AG04450 (cell line): ENCODE measurements at regions of chr22 and their contacts with region 1.

Region 1: DNA sequence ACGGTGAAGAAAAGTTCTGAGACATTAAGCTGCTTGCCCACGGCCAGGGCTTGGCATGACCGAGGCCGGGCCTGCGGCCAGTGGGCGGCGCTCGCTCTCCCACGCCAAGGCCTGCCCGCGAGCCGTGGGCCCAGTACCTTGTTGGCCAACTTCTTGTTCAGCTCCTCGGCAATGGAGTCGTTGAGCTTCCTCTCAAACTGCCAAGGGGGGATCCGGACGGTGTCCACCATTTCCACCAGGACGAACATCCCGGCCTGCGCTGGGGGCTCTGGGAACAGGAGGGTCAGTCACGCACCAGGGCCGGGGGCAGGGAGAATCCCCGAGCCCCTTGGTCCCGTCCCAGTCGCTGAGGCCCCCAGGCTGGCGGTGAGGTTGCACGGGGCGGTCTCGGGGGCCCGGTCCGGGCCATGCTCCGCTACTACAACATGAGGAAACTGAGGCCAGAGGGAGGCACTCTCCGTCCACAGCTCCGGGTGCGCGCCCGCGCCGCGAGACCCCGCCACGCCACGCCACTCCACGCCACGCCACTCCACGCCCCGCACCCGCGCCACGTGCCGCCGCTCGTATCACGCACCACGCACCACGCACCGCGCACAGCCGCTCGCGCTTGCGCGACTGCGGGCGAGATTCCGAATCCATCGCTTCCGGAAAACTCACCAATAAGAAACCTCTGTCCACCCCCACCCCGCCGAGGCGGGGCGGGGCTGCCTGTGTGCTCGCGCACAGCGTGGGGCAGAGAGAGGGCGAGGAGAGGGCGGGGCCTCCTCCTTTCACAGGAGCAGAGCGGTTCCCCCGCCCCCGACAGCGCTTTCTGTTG is at the start of gene POLR3H:
- DNase-seq: peak; percentile 94
- H3K4me3 ChIP-seq: peak within 1 kb of the TSS; percentile 92
- H3K27ac ChIP-seq: peak within 1 kb of the TSS; percentile 87
- H3K27me3 ChIP-seq: no peaks in the 10 kb centered on the region
- CTCF ChIP-seq: peak; percentile 69
- polyA plus RNA-seq, gene POLR3H: 36.3 and 41.1 TPM in 2 replicates

Region 2: DNA sequence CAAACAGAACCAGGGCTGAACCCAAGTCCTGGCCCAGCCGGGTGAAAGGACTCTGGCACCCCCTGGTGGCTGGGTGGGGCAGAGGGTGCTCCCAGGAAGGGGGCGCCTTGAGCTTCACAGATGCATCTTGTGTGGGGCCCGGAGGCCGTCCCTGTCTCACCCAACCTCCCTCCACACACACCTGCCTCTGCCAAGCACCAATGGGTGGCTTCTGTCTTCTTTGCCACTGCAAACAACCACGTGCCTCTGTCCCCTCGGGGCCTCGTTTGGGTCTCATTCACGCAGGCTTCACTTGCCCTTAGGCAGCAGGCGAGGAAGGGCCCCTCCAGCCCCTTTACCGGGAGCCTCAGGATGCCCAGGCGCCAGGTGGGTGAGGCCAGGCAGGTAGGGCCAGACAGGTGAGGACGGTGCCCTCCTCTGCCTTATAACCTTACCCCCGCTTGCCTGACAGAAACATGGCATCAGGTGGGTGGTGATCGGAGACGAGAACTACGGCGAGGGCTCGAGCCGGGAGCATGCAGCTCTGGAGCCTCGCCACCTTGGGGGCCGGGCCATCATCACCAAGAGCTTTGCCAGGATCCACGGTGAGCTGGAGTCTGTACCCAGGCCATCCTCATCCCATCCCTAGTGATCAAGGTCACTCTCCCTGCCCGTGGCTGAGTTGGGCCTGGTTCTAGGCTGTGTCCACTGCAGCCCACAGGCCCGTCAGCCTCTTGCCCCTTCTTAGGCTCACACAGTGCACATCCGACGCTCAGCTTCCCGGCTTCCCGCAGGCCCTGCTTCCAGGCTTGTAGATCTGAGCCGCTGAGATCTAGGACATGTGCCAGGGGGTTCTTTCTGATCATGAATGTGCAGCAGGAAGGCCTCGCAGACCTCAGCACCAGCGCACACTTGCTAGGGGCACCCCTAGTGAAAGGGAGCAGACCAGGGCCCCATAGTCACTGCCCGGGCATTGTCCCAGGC is 16.9 kb before region 1 on chr22:
- CTCF ChIA-PET with region 1: interaction called, 16 read pairs
- POLR2A ChIA-PET with region 1: interaction called, 3 read pairs
- DNase-seq: no peak
- H3K4me3 ChIP-seq: no peak overlapping the region
- H3K27ac ChIP-seq: peak overlapping the region; percentile 31
- H3K27me3 ChIP-seq: no peaks in the 10 kb centered on the region
- CTCF ChIP-seq: peak; percentile 86

Region 3: DNA sequence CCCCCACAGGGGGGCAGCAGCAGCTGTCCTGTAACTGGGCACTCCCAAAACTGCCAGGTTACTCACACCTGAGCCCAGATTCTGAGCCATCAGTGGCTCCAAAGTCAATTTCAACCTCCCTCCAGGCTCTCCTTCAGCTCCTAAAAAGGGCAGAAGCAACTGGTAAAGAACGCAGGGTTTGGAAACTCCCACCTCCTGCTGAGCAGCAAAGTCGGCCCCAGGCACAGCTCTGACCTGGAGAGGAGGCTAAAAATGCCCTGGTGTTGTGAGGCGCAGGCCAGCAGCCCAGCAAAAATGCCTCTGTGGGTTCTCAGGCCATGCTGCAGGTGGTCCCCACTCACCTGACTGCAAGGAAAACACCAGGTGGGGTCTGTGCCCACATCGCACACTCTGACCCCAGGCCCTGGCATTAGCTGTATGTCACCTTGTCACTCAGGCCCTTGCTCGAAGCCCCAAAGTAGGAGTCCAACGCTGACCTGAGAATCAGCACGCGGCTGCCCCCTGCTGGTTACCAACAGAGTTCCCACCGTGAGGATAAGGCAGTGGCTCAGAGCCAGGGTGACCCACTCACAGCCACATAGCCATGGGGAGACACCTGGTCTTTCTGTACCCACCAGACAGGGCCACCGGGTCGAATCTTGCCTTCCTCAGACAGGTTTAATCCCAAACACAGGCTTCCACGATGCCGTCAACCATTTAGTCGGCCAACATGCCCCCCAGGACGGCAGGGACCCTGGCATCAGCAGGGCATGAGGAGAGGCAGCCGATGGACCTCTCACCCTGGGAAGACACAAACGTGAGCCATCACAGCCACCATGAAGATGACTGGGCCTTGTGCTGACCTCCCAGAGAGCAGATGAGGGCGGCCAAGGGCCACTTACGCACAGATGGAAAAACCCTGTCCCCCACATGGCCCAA is 10.9 kb before region 1 on chr22:
- CTCF ChIA-PET with region 1: interaction called, 16 read pairs
- POLR2A ChIA-PET with region 1: no interaction called
- DNase-seq: no peak
- H3K4me3 ChIP-seq: no peak overlapping the region
- H3K27ac ChIP-seq: no peak overlapping the region
- H3K27me3 ChIP-seq: no peaks in the 10 kb centered on the region
- CTCF ChIP-seq: peak; percentile 80

Region 4: DNA sequence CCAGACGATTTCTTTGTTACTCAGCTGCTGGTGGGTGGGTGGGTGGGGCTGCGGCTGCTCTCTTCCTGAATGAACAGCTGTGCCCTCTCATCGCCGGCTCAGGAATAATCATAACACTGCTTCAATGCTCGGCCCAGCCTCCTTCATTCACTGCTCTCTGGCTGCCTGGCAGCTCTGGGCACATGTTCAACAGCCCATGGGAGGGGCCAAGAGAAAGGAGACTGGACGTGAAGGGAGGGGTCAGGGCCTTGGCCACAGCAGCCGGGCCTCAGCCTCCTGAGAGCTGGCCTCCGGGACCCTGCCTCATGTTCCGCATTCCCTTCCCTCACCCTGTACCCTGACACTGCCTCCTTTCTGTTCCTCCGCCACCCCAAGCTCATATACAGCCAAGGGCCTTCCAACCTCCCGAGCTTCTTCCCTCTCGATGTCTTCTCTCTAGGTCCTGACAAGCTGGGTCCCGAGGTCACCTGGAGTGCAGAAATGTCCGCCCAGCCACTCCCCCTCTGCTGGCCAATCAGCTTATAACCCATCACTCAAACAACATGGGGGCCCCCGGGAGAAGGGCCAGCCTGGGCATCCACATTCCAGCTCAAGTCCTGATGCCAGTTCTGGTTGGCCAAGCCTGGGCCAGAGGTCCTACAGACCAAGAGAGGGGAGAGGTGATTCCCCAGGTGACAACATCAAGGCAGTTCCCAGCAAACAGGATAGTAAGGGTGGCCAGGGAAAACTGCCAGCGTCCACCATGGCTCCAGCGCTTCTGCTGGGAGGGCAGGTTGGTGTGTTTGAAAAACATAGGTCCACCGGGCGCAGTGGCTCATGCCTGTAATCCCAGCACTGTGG is 13.6 kb after region 1 on chr22:
- CTCF ChIA-PET with region 1: interaction called, 7 read pairs
- POLR2A ChIA-PET with region 1: interaction called, 13 read pairs
- DNase-seq: peak; percentile 88
- H3K4me3 ChIP-seq: peak overlapping the region; percentile 17
- H3K27ac ChIP-seq: peak overlapping the region; percentile 93
- H3K27me3 ChIP-seq: no peaks in the 10 kb centered on the region
- CTCF ChIP-seq: no peak

Region 5: GRCh38 chr22:41589391-41590241 is 45.6 kb after region 1 on chr22 and contains the start of gene PMM1:
- CTCF ChIA-PET with region 1: interaction called, 12 read pairs
- POLR2A ChIA-PET with region 1: interaction called, 16 read pairs
- DNase-seq: peak; percentile 99
- H3K4me3 ChIP-seq: peak within 1 kb of the TSS; percentile 95
- H3K27ac ChIP-seq: peak within 1 kb of the TSS; percentile 61
- H3K27me3 ChIP-seq: no peaks in the 10 kb centered on the region
- CTCF ChIP-seq: no peak
- polyA plus RNA-seq, gene PMM1: 60.7 and 72.5 TPM in 2 replicates

Region 6: DNA sequence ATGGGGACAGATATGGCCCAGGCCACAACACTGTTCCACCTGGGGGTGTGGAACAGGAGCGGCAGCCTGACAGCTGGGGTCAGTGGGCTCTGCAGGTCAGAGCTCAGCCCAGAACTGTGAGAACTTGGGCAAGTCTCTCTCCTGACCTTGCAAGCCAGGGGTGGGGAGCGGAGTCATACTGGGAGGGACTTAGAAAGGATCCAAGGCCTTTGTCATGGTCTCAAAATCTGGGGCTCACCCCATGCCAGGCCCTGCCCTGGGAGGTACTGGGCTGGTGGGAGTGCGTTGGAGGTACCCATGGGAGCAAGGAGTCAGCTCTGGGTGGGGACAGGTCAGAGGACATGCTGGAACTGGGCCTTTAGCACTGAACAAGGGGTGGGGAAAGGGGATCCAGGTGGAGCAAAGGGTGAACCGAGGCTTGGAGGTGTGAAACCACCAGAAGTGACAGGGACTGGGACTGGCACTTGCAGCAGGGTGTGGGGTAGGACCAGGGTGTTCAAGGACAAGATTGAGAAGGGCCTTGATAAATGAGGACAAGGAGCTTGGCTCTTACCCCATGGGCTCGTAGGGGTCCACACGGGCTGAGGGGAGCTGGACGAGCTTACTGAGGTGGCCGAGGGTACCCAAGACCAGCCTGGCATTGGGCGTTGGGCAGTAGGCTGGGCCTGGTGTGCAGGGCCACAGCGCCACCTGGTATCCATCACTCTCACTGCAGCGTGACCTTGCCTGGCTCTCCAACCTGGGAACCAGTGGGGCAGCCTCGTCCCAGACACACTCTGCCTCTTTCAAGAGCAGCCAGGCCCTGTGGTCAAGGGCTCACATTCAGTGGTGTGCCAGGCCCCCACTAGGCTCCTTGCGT is 52.9 kb after region 1 on chr22:
- CTCF ChIA-PET with region 1: interaction called, 25 read pairs
- POLR2A ChIA-PET with region 1: no interaction called
- DNase-seq: no peak
- H3K4me3 ChIP-seq: no peak overlapping the region
- H3K27ac ChIP-seq: peak overlapping the region; percentile 31
- H3K27me3 ChIP-seq: no peaks in the 10 kb centered on the region
- CTCF ChIP-seq: peak; percentile 71